K562 (cell line): ENCODE measurements at regions of chr1 and their contacts with region 1.

Region 1: DNA sequence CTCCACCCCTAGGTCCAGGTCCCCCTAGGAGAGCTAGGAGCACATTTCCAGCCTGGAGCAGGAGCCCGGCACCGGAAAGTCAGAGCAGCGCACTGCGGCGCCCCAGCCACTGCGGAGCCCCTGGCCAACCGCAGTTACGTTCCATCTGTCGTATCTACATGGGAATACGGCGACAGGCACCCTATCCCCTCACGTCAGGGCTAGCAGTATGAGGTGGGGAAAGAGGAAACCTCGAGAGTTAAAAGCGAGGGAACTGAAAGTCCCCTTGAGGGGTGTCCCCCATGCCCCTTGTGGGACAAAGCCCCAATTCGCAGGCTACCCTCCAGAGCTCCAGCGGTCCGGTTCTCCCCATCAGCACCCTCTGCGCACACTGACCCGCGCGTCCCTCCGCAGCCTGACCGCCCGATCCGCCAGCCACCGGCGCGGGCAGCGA is 995 bp downstream of the COLGALT2 start:
- DNase-seq: peak; percentile 53 to 69 (median 58)
- ATAC-seq: peak; percentile 65
- H3K4me3 ChIP-seq: peak overlapping the region; percentile 65
- H3K27ac ChIP-seq: peak overlapping the region; percentile 82
- H3K4me1 ChIP-seq: peaks cover 24 to 47% of the 10 kb centered on the region in 2 experiments
- H3K27me3 ChIP-seq: no peaks in the 10 kb centered on the region
- CTCF ChIP-seq: no peak; a peak in 1 of 6 replicates
- EP300 ChIP-seq: no peak
- POLR2A ChIP-seq: peak; percentile 51; the same call in 1 of the 2 replicates
- RAD21 ChIP-seq: no peak

Region 2: GRCh38 chr1:183764981-183765380 is 271.6 kb before region 1 on chr1:
- CTCF ChIA-PET with region 1: no interaction called
- POLR2A ChIA-PET with region 1: no interaction called
- in situ Hi-C with region 1: no loop called
- intact Hi-C with region 1: no loop called
- DNase-seq: no peak
- ATAC-seq: no peak
- H3K4me3 ChIP-seq: no peak overlapping the region
- H3K27ac ChIP-seq: no peak overlapping the region
- H3K4me1 ChIP-seq: no peaks in the 10 kb centered on the region
- H3K27me3 ChIP-seq: no peaks in the 10 kb centered on the region
- CTCF ChIP-seq: no peak
- EP300 ChIP-seq: no peak
- POLR2A ChIP-seq: no peak
- RAD21 ChIP-seq: no peak

Region 3: GRCh38 chr1:183932412-183932811 is 104.1 kb before region 1 on chr1:
- CTCF ChIA-PET with region 1: no interaction called
- POLR2A ChIA-PET with region 1: no interaction called
- in situ Hi-C with region 1: no loop called
- intact Hi-C with region 1: loop called (anchors 5 kb)
- DNase-seq: no peak
- ATAC-seq: peak; percentile 40
- H3K4me3 ChIP-seq: no peak overlapping the region
- H3K27ac ChIP-seq: no peak overlapping the region
- H3K4me1 ChIP-seq: peaks cover 0 to 4% of the 10 kb centered on the region in 2 experiments; a peak in 3 of 5 replicates
- H3K27me3 ChIP-seq: peaks cover 13 to 16% of the 10 kb centered on the region in 2 experiments; a peak in 4 of 5 replicates
- CTCF ChIP-seq: no peak
- EP300 ChIP-seq: no peak
- POLR2A ChIP-seq: no peak
- RAD21 ChIP-seq: no peak

Region 4: DNA sequence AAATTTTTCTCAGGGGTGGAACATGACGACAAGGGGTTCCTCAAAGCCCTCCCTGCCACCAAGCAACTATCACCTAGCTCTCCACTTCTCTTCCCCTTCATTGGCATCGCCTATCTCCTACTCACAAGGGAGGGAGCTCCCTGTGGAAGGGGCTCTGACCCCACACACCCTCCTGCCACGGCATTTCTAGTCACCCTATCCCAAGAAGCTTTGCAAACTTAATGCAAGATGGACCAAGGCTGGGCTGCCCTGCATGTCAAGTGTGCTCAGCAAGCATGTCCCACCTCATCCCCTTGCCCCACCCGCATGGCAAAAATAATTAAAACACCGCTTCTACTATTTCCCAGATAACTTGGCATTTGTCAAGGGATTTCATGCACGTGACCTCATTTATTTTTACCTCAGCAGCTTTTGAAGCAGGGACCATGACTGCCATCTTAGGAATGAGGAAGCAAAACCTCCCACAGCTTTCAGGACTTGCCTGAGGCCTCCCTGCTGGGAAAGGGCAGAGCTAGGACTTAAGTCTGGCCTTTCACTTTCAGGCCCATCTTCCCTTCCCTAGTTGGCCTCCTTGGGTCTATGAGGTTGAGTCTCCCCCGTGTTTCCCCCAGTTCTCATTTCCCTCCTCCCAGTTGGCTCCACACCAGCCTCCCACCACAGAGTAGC is 176.2 kb after region 1 on chr1:
- CTCF ChIA-PET with region 1: no interaction called
- POLR2A ChIA-PET with region 1: no interaction called
- in situ Hi-C with region 1: no loop called
- intact Hi-C with region 1: no loop called
- DNase-seq: no peak
- ATAC-seq: no peak; the same call in 2 of the 3 replicates
- H3K4me3 ChIP-seq: no peak overlapping the region
- H3K27ac ChIP-seq: no peak overlapping the region
- H3K4me1 ChIP-seq: no peaks in the 10 kb centered on the region
- H3K27me3 ChIP-seq: peaks cover 2 to 26% of the 10 kb centered on the region in 2 experiments; a peak in 2 of 5 replicates
- CTCF ChIP-seq: no peak
- EP300 ChIP-seq: no peak
- POLR2A ChIP-seq: no peak
- RAD21 ChIP-seq: no peak